CD8-positive, alpha-beta T cell (primary cell): ENCODE measurements at regions of chr15 and their contacts with region 1.

Region 1: DNA sequence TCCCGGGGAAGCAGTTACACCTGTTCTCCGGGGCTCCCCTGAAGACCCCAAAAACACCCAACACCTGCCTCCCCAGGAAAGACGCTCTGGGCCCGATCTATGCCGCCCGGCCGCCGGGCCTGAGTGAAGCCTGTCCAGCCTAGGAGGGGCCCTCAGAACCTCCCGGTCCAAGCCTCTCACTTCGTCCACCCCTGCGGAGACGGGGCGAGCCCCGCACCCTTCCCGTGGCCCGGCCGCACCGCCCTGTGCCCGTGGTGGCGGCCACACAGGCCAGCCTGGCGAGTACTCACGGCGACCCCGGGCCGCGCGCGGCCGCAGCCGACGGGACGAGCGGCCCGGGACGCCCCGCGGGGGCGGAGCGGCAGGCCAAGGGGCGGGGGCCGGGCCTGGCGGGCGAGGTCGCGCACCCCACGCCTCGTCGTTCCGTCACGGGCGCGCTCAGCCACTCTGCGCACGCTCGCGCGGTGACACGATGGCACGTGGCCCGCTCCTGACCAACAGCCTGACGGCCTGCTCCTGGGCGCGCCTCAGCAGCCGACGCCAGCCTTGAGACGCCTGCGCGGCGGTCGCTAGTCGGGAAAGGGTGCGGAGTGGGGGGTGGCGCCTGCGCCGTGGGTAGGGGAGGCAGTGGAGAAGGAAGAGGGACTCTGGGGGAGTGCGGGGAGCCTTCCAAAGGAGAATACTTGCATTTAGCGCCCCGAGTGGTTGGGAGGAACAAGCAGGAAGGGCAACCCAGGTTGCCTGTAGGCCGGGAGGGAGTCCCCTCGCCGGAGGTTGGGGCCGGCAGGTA is at the start of gene PARP6:
- DNase-seq: peak; percentile 97 to 100 (median 99)
- ATAC-seq: peak; percentile 95
- H3K4me3 ChIP-seq: peak within 1 kb of the TSS; percentile 82 to 89
- H3K4me3 Mint-ChIP-seq: peak within 1 kb of the TSS; percentile 87
- H3K27ac ChIP-seq: peak within 1 kb of the TSS; percentile 84 to 85
- H3K27ac Mint-ChIP-seq: peak within 1 kb of the TSS; percentile 93
- H3K4me1 ChIP-seq: peaks cover 28% of the 10 kb centered on the region
- H3K4me1 Mint-ChIP-seq: peaks cover 43% of the 10 kb centered on the region
- H3K27me3 ChIP-seq: no peaks in the 10 kb centered on the region
- H3K27me3 Mint-ChIP-seq: no peaks in the 10 kb centered on the region
- CTCF ChIP-seq: peak; percentile 61
- total RNA-seq, gene PARP6: 133 to 137 TPM

Region 2: GRCh38 chr15:72117486-72118399 is 154.7 kb before region 1 on chr15 and contains the start of gene MYO9A:
- CTCF ChIA-PET with region 1: no interaction called
- POLR2A ChIA-PET with region 1: interaction called, 3 read pairs
- intact Hi-C with region 1: loop called (anchors 1 kb)
- DNase-seq: peak; percentile 97 to 100 (median 99)
- ATAC-seq: peak; percentile 80
- H3K4me3 ChIP-seq: peak within 1 kb of the TSS; percentile 78 to 93
- H3K4me3 Mint-ChIP-seq: peak within 1 kb of the TSS; percentile 99
- H3K27ac ChIP-seq: peak within 1 kb of the TSS; percentile 95 to 97
- H3K27ac Mint-ChIP-seq: peak within 1 kb of the TSS; percentile 99
- H3K4me1 ChIP-seq: peaks cover 18% of the 10 kb centered on the region
- H3K4me1 Mint-ChIP-seq: peaks cover 45% of the 10 kb centered on the region
- H3K27me3 ChIP-seq: no peaks in the 10 kb centered on the region
- H3K27me3 Mint-ChIP-seq: no peaks in the 10 kb centered on the region
- CTCF ChIP-seq: no peak
- total RNA-seq, gene MYO9A: 15.1 to 20.0 TPM

Region 3: DNA sequence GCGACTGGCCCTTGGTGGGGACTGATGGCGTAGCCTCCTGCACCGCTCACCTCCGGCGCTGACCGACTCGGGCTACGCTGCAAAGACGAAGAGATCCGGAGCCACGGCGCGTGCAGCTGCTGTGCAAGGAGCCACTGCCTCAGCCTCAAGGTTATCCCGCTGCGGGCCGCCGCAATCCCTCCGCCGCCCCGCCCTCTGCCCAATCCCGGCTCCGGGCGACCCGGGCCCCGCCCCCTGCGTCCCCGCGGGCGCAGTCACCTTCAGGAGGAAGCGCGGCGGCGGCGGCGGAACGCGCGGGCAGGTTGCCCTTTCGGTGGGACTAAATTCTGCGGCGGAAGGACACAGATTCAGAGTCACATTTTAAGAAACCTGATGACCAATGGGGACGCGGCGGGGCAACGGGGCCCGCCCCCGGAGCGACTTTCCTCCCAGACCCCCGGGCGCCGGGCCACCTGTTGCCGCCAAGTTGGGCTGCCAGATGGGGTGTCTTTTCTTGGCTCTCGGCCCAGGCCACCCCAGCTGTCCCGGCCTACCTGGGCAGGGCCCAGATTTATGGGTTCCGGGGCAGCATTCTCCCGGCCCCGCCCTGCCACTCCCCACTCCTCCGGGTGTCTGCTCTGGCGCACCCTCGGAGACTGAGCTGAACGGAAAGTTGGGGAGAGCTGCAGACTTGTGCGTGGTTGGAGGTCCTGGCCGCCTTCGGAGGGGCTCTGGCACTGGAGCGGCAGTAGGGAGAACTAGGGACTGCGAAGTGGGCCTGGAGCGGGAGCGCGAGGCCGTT is 41.2 kb before region 1 on chr15 and contains the start of gene PKM:
- CTCF ChIA-PET with region 1: interaction called, 12 read pairs
- POLR2A ChIA-PET with region 1: interaction called, 8 read pairs
- intact Hi-C with region 1: loop called (anchors 1 kb)
- DNase-seq: peak; percentile 66 to 96 (median 90)
- ATAC-seq: peak; percentile 22
- H3K4me3 ChIP-seq: peak within 1 kb of the TSS; percentile 83 to 95
- H3K4me3 Mint-ChIP-seq: peak within 1 kb of the TSS; percentile 99
- H3K27ac ChIP-seq: peak within 1 kb of the TSS; percentile 67 to 84
- H3K27ac Mint-ChIP-seq: peak within 1 kb of the TSS; percentile 97
- H3K4me1 ChIP-seq: peaks cover 40% of the 10 kb centered on the region
- H3K4me1 Mint-ChIP-seq: peaks cover 47% of the 10 kb centered on the region
- H3K27me3 ChIP-seq: no peaks in the 10 kb centered on the region
- H3K27me3 Mint-ChIP-seq: no peaks in the 10 kb centered on the region
- CTCF ChIP-seq: no peak
- total RNA-seq, gene PKM: 121 to 123 TPM

Region 4: DNA sequence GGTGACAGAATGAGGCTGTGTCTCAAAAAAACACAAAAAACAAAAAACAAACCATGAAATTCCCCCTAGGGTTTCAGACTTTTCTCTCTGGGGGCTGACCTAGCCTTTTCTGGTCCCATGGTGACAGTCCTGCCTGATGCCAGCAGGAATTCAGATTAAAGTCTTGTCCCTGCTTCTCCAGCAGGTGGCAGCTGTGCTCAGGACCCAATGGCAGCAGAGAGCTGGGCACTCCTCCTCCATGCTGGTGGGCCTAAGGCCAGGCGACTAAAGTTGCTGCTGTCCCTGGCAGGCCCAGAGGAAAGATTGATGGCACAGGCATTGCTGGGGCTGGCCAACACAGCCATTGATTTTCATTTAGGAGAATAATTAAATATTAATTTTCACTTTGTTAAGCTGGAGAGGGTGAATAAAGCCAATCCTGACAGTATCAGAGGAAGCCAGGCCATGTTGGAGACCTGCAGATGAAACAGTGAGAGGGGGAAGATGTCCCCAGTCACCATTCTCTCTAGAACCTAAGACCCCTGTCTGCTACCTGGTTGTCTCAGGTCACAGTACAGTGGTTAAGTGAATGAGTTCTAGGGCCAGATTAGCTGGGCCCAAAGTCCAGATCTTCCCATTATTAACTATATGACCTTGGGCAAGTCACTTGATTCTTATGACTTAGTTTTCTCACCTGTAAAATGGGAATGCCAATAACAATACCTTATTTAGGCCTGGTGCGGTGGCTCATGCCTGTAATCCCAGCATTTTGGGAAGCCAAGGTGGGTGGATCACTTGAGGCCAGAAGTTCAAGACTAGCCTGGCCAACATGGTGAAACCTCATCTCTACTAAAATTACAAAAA is 40.4 kb after region 1 on chr15:
- CTCF ChIA-PET with region 1: no interaction called
- POLR2A ChIA-PET with region 1: no interaction called
- intact Hi-C with region 1: loop called in 1 of 2 experiments (anchors 2 kb)
- DNase-seq: peak; percentile 12 to 74 (median 60)
- ATAC-seq: peak; percentile 89
- H3K4me3 ChIP-seq: no peak overlapping the region
- H3K4me3 Mint-ChIP-seq: no peak overlapping the region
- H3K27ac ChIP-seq: no peak overlapping the region
- H3K27ac Mint-ChIP-seq: no peak overlapping the region
- H3K4me1 ChIP-seq: no peaks in the 10 kb centered on the region
- H3K4me1 Mint-ChIP-seq: no peaks in the 10 kb centered on the region
- H3K27me3 ChIP-seq: no peaks in the 10 kb centered on the region
- H3K27me3 Mint-ChIP-seq: no peaks in the 10 kb centered on the region
- CTCF ChIP-seq: peak; percentile 69

Region 5: GRCh38 chr15:72375847-72376581 is 103.6 kb after region 1 on chr15 and contains the start of gene HEXA:
- CTCF ChIA-PET with region 1: no interaction called
- POLR2A ChIA-PET with region 1: interaction called, 9 read pairs
- intact Hi-C with region 1: loop called (anchors 1 to 2 kb)
- DNase-seq: peak; percentile 94 to 99 (median 97)
- ATAC-seq: peak; percentile 73
- H3K4me3 ChIP-seq: peak within 1 kb of the TSS; percentile 75 to 77
- H3K4me3 Mint-ChIP-seq: peak within 1 kb of the TSS; percentile 90
- H3K27ac ChIP-seq: peak within 1 kb of the TSS; percentile 83 to 90
- H3K27ac Mint-ChIP-seq: peak within 1 kb of the TSS; percentile 96
- H3K4me1 ChIP-seq: peaks cover 36% of the 10 kb centered on the region
- H3K4me1 Mint-ChIP-seq: peaks cover 56% of the 10 kb centered on the region
- H3K27me3 ChIP-seq: no peaks in the 10 kb centered on the region
- H3K27me3 Mint-ChIP-seq: no peaks in the 10 kb centered on the region
- CTCF ChIP-seq: no peak
- total RNA-seq, gene HEXA: 68.6 to 76.0 TPM

Region 6: GRCh38 chr15:72685925-72686794 is 413.8 kb after region 1 on chr15 and contains the starts of genes BBS4 and HIGD2B:
- CTCF ChIA-PET with region 1: no interaction called
- POLR2A ChIA-PET with region 1: no interaction called
- intact Hi-C with region 1: loop called (anchors 1 to 5 kb)
- DNase-seq: peak; percentile 68 to 93 (median 86)
- ATAC-seq: peak; percentile 92
- H3K4me3 ChIP-seq: peak within 1 kb of the TSS; percentile 73 to 87
- H3K4me3 Mint-ChIP-seq: peak within 1 kb of the TSS; percentile 97
- H3K27ac ChIP-seq: peak within 1 kb of the TSS; percentile 86 to 90
- H3K27ac Mint-ChIP-seq: peak within 1 kb of the TSS; percentile 96
- H3K4me1 ChIP-seq: peaks cover 14% of the 10 kb centered on the region
- H3K4me1 Mint-ChIP-seq: peaks cover 18% of the 10 kb centered on the region
- H3K27me3 ChIP-seq: no peaks in the 10 kb centered on the region
- H3K27me3 Mint-ChIP-seq: no peaks in the 10 kb centered on the region
- CTCF ChIP-seq: no peak
- total RNA-seq, gene BBS4: 8.8 to 12.9 TPM
- total RNA-seq, gene HIGD2B: 0.27 TPM in 1 of 2 experiments, not detected in the other

Region 7: GRCh38 chr15:73991726-73992593 is 1719.6 kb after region 1 on chr15 and contains the start of gene STOML1:
- CTCF ChIA-PET with region 1: no interaction called
- POLR2A ChIA-PET with region 1: no interaction called
- intact Hi-C with region 1: loop called in 1 of 2 experiments (anchors 5 kb)
- DNase-seq: peak; percentile 88 to 97 (median 96)
- ATAC-seq: peak; percentile 79
- H3K4me3 ChIP-seq: peak within 1 kb of the TSS; percentile 62 to 88
- H3K4me3 Mint-ChIP-seq: peak within 1 kb of the TSS; percentile 100
- H3K27ac ChIP-seq: peak within 1 kb of the TSS; percentile 53
- H3K27ac Mint-ChIP-seq: peak within 1 kb of the TSS; percentile 73
- H3K4me1 ChIP-seq: peaks cover 42% of the 10 kb centered on the region
- H3K4me1 Mint-ChIP-seq: peaks cover 48% of the 10 kb centered on the region
- H3K27me3 ChIP-seq: no peaks in the 10 kb centered on the region
- H3K27me3 Mint-ChIP-seq: no peaks in the 10 kb centered on the region
- CTCF ChIP-seq: peak; percentile 95
- total RNA-seq, gene STOML1: 2.5 to 4.8 TPM